ENCODE measurements at regions of chr10 and their contacts with region 1.

Region 1: GRCh38 chr10:113678690-113679462 is 836 bp upstream of the CASP7 start:
- DNase-seq: peak; percentile 41 to 70 (median 56)
- H3K4me3 ChIP-seq: peak overlapping the region; percentile 69 to 85
- H3K4me3 Mint-ChIP-seq: peak overlapping the region; percentile 93 to 98 (median 96)
- H3K27ac ChIP-seq: peak overlapping the region; percentile 69
- H3K27ac Mint-ChIP-seq: peak overlapping the region; percentile 70 to 98 (median 91)
- H3K4me1 ChIP-seq: peaks cover 30% of the 10 kb centered on the region
- H3K4me1 Mint-ChIP-seq: peaks cover 35 to 45% (median 37%) of the 10 kb centered on the region in 4 donors
- H3K27me3 ChIP-seq: no peaks in the 10 kb centered on the region
- H3K27me3 Mint-ChIP-seq: peaks cover 0 to 2% of the 10 kb centered on the region in 2 donors

Region 2: GRCh38 chr10:113689057-113689456 is 10.2 kb after region 1 on chr10:
- CTCF ChIA-PET with region 1: interaction called, 7 read pairs
- POLR2A ChIA-PET with region 1: interaction called, 11 read pairs
- intact Hi-C with region 1: no loop called
- DNase-seq: no peak
- H3K4me3 ChIP-seq: no peak overlapping the region
- H3K4me3 Mint-ChIP-seq: peak overlapping the region; percentile 22 to 81 (median 59)
- H3K27ac ChIP-seq: no peak overlapping the region
- H3K27ac Mint-ChIP-seq: peak overlapping the region; percentile 20 to 88 (median 64)
- H3K4me1 ChIP-seq: peaks cover 16% of the 10 kb centered on the region
- H3K4me1 Mint-ChIP-seq: peaks cover 25 to 52% (median 41%) of the 10 kb centered on the region in 4 donors
- H3K27me3 ChIP-seq: no peaks in the 10 kb centered on the region
- H3K27me3 Mint-ChIP-seq: no peaks in the 10 kb centered on the region

Region 3: GRCh38 chr10:113854011-113854760 is 175.3 kb after region 1 on chr10 and contains the starts of genes DCLRE1A and NHLRC2:
- CTCF ChIA-PET with region 1: no interaction called
- POLR2A ChIA-PET with region 1: no interaction called
- intact Hi-C with region 1: loop called (anchors 1 kb)
- DNase-seq: peak; percentile 46 to 65 (median 53)
- H3K4me3 ChIP-seq: peak within 1 kb of the TSS; percentile 90 to 97
- H3K4me3 Mint-ChIP-seq: peak within 1 kb of the TSS; percentile 96 to 100 (median 98)
- H3K27ac ChIP-seq: peak within 1 kb of the TSS; percentile 71
- H3K27ac Mint-ChIP-seq: peak within 1 kb of the TSS; percentile 92 to 98 (median 97)
- H3K4me1 ChIP-seq: peaks cover 65% of the 10 kb centered on the region
- H3K4me1 Mint-ChIP-seq: peaks cover 31 to 61% (median 44%) of the 10 kb centered on the region in 4 donors
- H3K27me3 ChIP-seq: no peaks in the 10 kb centered on the region
- H3K27me3 Mint-ChIP-seq: no peaks in the 10 kb centered on the region
- total RNA-seq, gene DCLRE1A: 4.5 to 4.7 TPM
- total RNA-seq, gene NHLRC2: 22.1 to 24.1 TPM

Region 4: GRCh38 chr10:114103284-114103683 is 424.4 kb after region 1 on chr10:
- CTCF ChIA-PET with region 1: no interaction called
- POLR2A ChIA-PET with region 1: no interaction called
- intact Hi-C with region 1: loop called (anchors 1 kb)
- DNase-seq: peak in 4 of 5 donors; percentile 26 to 41 (median 33)
- H3K4me3 ChIP-seq: no peak overlapping the region
- H3K4me3 Mint-ChIP-seq: peak overlapping the region in 2 of 8 donors; percentile 38 to 48
- H3K27ac ChIP-seq: no peak overlapping the region
- H3K27ac Mint-ChIP-seq: no peak overlapping the region
- H3K4me1 ChIP-seq: peaks cover 15% of the 10 kb centered on the region
- H3K4me1 Mint-ChIP-seq: peaks cover 20 to 31% (median 23%) of the 10 kb centered on the region in 4 donors
- H3K27me3 ChIP-seq: peaks cover 12% of the 10 kb centered on the region
- H3K27me3 Mint-ChIP-seq: peaks cover 19 to 27% of the 10 kb centered on the region in 2 donors

Region 5: GRCh38 chr10:114173921-114174694 is 495.2 kb after region 1 on chr10 and contains the start of gene CCDC186:
- CTCF ChIA-PET with region 1: no interaction called
- POLR2A ChIA-PET with region 1: interaction called, 9 read pairs
- intact Hi-C with region 1: loop called (anchors 1 kb)
- DNase-seq: peak; percentile 97 to 98 (median 97)
- H3K4me3 ChIP-seq: peak within 1 kb of the TSS; percentile 47 to 84
- H3K4me3 Mint-ChIP-seq: peak within 1 kb of the TSS; percentile 92 to 99 (median 98)
- H3K27ac ChIP-seq: peak within 1 kb of the TSS; percentile 85
- H3K27ac Mint-ChIP-seq: peak within 1 kb of the TSS; percentile 83 to 99 (median 99)
- H3K4me1 ChIP-seq: peaks cover 35% of the 10 kb centered on the region
- H3K4me1 Mint-ChIP-seq: peaks cover 31 to 57% (median 38%) of the 10 kb centered on the region in 4 donors
- H3K27me3 ChIP-seq: no peaks in the 10 kb centered on the region
- H3K27me3 Mint-ChIP-seq: peaks cover 0 to 1% of the 10 kb centered on the region in 2 donors
- total RNA-seq, gene CCDC186: 39.1 to 43.3 TPM

Region 6: GRCh38 chr10:114937962-114938855 is 1259.3 kb after region 1 on chr10 and contains the start of gene TRUB1:
- CTCF ChIA-PET with region 1: no interaction called
- POLR2A ChIA-PET with region 1: no interaction called
- intact Hi-C with region 1: loop called (anchors 5 kb)
- DNase-seq: peak; percentile 85 to 93 (median 87)
- H3K4me3 ChIP-seq: peak within 1 kb of the TSS; percentile 67 to 73
- H3K4me3 Mint-ChIP-seq: peak within 1 kb of the TSS; percentile 94 to 97 (median 96)
- H3K27ac ChIP-seq: peak within 1 kb of the TSS; percentile 75
- H3K27ac Mint-ChIP-seq: peak within 1 kb of the TSS; percentile 93 to 98 (median 97)
- H3K4me1 ChIP-seq: peaks cover 15% of the 10 kb centered on the region
- H3K4me1 Mint-ChIP-seq: peaks cover 21 to 41% (median 31%) of the 10 kb centered on the region in 4 donors
- H3K27me3 ChIP-seq: no peaks in the 10 kb centered on the region
- H3K27me3 Mint-ChIP-seq: no peaks in the 10 kb centered on the region
- total RNA-seq, gene TRUB1: 11.3 to 14.5 TPM

Measured in CD4-positive, alpha-beta memory T cell (primary cell).